AG04450 (cell line): ENCODE measurements at regions of chr16 and their contacts with region 1.

Region 1: DNA sequence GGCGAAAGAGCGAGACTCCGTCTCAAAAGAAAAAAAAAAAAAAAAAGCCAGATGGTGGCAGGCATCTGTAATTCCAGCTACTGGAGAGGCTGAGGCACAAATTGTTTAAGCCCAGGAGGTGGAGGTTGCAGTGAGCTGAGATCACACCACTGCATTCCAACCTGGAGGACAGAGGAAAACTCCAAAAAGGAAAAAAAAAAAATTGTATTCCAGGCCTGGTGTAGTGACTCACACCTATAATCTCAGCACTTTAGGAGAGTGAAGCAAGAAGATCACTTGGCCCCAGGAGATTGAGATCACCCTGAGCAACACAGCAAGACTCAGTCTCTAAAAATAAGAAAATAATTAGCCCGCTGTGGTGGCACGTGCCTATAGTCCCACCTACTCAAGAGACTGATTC is 20.1 kb downstream of the HBQ1 start:
- DNase-seq: no peak
- H3K4me3 ChIP-seq: no peak overlapping the region
- H3K27ac ChIP-seq: no peak overlapping the region
- H3K27me3 ChIP-seq: no peaks in the 10 kb centered on the region
- CTCF ChIP-seq: no peak

Region 2: GRCh38 chr16:117379-118365 is 82.7 kb before region 1 on chr16:
- CTCF ChIA-PET with region 1: no interaction called
- POLR2A ChIA-PET with region 1: no interaction called
- DNase-seq: no peak
- H3K4me3 ChIP-seq: no peak overlapping the region
- H3K27ac ChIP-seq: no peak overlapping the region
- H3K27me3 ChIP-seq: no peaks in the 10 kb centered on the region
- CTCF ChIP-seq: peak; percentile 73

Region 3: DNA sequence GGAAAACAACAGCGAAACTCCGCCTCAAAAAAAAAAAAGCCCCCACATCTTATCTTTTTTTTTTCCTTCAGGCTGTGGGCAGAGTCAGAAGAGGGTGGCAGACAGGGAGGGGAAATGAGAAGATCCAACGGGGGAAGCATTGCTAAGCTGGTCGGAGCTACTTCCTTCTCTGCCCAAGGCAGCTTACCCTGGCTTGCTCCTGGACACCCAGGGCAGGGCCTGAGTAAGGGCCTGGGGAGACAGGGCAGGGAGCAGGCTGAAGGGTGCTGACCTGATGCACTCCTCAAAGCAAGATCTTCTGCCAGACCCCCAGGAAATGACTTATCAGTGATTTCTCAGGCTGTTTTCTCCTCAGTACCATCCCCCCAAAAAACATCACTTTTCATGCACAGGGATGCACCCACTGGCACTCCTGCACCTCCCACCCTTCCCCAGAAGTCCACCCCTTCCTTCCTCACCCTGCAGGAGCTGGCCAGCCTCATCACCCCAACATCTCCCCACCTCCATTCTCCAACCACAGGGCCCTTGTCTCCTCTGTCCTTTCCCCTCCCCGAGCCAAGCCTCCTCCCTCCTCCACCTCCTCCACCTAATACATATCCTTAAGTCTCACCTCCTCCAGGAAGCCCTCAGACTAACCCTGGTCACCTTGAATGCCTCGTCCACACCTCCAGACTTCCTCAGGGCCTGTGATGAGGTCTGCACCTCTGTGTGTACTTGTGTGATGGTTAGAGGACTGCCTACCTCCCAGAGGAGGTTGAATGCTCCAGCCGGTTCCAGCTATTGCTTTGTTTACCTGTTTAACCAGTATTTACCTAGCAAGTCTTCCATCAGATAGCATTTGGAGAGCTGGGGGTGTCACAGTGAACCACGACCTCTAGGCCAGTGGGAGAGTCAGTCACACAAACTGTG is 25.1 kb before region 1 on chr16:
- CTCF ChIA-PET with region 1: no interaction called
- POLR2A ChIA-PET with region 1: no interaction called
- DNase-seq: no peak
- H3K4me3 ChIP-seq: no peak overlapping the region
- H3K27ac ChIP-seq: no peak overlapping the region
- H3K27me3 ChIP-seq: peaks cover 46% of the 10 kb centered on the region
- CTCF ChIP-seq: no peak

Region 4: DNA sequence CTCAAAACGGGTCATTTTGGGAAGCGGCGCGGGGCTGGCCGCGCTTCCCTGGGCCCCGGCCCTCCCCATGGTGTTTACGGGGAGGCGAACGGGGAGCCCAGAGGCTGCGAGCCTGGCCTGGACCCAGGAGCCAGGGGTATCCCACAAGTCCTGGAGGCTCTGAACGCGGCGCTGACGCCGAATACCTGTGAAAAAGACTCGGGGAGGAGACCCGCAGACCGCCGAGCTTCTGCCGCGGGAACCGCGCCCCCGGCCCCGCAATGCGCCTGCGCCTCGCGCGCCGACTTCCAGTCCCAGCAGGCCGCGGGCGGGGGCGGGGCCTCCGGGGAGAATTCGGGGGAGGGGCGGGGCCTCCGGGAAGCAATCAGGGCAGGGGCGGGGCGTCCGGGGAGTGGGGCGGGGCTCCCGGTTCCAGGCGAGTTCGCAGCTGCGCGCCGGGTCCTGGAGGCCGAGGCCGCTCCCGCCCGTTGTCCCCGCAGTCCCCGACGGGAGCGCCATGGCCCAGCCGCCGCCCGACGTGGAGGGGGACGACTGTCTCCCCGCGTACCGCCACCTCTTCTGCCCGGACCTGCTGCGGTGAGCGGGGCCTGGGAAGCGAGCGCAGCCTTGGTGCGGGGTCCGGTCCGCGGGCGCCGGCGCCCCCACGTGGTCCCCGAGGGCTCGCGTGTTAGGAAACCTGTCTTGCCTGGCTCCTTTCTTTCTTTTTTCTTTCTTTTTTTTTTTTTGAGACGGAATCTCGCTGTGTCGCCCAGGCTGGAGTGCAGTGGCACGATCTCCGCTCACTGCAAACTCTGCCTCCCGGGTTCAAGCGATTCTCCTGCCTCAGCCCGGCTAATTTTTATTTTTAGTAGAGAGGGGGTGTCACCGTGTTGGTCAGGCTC is 201.3 kb after region 1 on chr16 and contains the start of gene DECR2:
- CTCF ChIA-PET with region 1: no interaction called
- POLR2A ChIA-PET with region 1: interaction called, 11 read pairs
- DNase-seq: peak; percentile 56
- H3K4me3 ChIP-seq: peak within 1 kb of the TSS; percentile 84
- H3K27ac ChIP-seq: peak within 1 kb of the TSS; percentile 11
- H3K27me3 ChIP-seq: no peaks in the 10 kb centered on the region
- CTCF ChIP-seq: peak; percentile 35
- polyA plus RNA-seq, gene DECR2: 11.6 and 16.0 TPM in 2 replicates